ENCODE measurements at regions of chr13 and their contacts with region 1.

Region 1: DNA sequence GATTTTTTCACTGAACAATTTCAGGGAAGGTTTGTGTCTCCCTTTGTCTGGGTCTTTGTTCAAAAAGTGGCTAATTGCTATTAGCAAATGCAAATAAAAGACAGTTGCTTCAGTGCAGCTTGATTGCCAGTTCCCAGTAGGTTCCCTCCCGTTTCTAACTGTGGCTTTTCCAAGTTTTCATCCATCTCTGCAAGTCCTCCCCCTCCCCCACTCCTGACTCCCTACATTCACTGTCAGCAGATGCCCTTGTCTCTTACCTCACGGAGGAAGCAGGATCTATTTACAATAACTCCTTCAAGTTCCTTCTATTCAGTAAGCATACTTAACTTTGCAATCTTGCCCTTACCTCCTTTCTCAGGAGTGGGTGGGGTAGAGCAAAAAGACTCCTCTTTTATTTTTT is 55.4 kb upstream of the SCEL start:
- DNase-seq: no peak
- H3K4me3 ChIP-seq: no peak overlapping the region
- H3K4me3 Mint-ChIP-seq: no peak overlapping the region
- H3K27ac ChIP-seq: no peak overlapping the region
- H3K27ac Mint-ChIP-seq: no peak overlapping the region
- H3K4me1 ChIP-seq: peaks cover 8% of the 10 kb centered on the region
- H3K4me1 Mint-ChIP-seq: peaks cover 8 to 11% (median 10%) of the 10 kb centered on the region in 4 donors
- H3K27me3 ChIP-seq: no peaks in the 10 kb centered on the region
- H3K27me3 Mint-ChIP-seq: no peaks in the 10 kb centered on the region

Region 2: DNA sequence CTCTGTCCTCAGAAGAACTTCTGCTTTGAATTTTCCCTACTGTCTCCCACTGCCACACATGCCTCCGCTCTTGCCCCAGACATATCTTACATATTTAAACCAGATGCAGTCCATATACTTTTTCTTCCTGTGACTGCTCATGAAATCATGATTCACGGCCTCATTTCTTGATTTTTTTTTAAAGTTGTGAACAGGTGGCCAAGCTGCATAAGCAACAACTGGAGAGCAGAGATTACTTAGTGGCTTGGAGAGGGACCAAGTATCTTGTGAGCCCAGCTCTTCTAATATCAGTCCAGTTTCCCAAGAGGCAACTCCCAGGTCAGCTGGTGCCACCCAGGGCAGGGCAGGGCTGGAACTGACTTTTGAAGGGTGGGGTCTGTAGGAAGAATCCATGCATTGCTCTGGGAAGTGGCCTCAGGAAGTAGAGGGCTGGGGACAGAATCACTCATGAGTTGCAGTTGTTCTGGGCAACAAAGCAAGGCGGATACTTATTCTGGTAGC is 1691.5 kb before region 1 on chr13:
- CTCF ChIA-PET with region 1: no interaction called
- POLR2A ChIA-PET with region 1: no interaction called
- intact Hi-C with region 1: no loop called
- DNase-seq: no peak
- H3K4me3 ChIP-seq: no peak overlapping the region
- H3K4me3 Mint-ChIP-seq: no peak overlapping the region
- H3K27ac ChIP-seq: no peak overlapping the region
- H3K27ac Mint-ChIP-seq: no peak overlapping the region
- H3K4me1 ChIP-seq: no peaks in the 10 kb centered on the region
- H3K4me1 Mint-ChIP-seq: no peaks in the 10 kb centered on the region
- H3K27me3 ChIP-seq: no peaks in the 10 kb centered on the region
- H3K27me3 Mint-ChIP-seq: no peaks in the 10 kb centered on the region

Region 3: GRCh38 chr13:77168237-77168636 is 311.8 kb before region 1 on chr13:
- CTCF ChIA-PET with region 1: no interaction called
- POLR2A ChIA-PET with region 1: no interaction called
- intact Hi-C with region 1: loop called (anchors 5 kb)
- DNase-seq: no peak
- H3K4me3 ChIP-seq: no peak overlapping the region
- H3K4me3 Mint-ChIP-seq: no peak overlapping the region
- H3K27ac ChIP-seq: no peak overlapping the region
- H3K27ac Mint-ChIP-seq: peak overlapping the region in 1 of 7 donors; percentile 52
- H3K4me1 ChIP-seq: no peaks in the 10 kb centered on the region
- H3K4me1 Mint-ChIP-seq: peaks cover 3 to 16% (median 6%) of the 10 kb centered on the region in 4 donors
- H3K27me3 ChIP-seq: no peaks in the 10 kb centered on the region
- H3K27me3 Mint-ChIP-seq: no peaks in the 10 kb centered on the region

Region 4: GRCh38 chr13:77184455-77184854 is 295.6 kb before region 1 on chr13:
- CTCF ChIA-PET with region 1: interaction called, 10 read pairs
- POLR2A ChIA-PET with region 1: interaction called, 4 read pairs
- intact Hi-C with region 1: loop called (anchors 2 kb)
- DNase-seq: no peak
- H3K4me3 ChIP-seq: no peak overlapping the region
- H3K4me3 Mint-ChIP-seq: peak overlapping the region in 1 of 8 donors; percentile 1
- H3K27ac ChIP-seq: no peak overlapping the region
- H3K27ac Mint-ChIP-seq: peak overlapping the region in 5 of 7 donors; percentile 16 to 90 (median 71)
- H3K4me1 ChIP-seq: peaks cover 15% of the 10 kb centered on the region
- H3K4me1 Mint-ChIP-seq: peaks cover 11 to 17% (median 14%) of the 10 kb centered on the region in 4 donors
- H3K27me3 ChIP-seq: no peaks in the 10 kb centered on the region
- H3K27me3 Mint-ChIP-seq: no peaks in the 10 kb centered on the region

Region 5: DNA sequence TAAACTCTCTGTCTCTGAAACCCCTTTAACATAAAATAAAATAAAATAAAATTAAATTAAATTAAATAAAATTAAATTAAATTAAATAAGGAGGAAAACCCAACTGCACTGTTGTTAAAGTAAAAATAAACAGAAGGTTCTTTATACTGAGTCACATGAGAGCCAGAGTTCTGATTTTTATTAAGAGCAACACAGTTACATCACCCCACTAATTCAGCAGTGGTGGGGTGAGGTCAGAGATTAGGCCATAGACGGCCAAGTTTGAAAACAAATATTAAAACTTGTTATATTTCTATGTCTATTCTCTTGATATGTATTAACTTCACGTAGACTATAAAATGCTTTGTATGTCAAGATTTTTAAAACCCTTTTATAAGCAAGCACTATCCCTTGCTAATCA is 212.7 kb before region 1 on chr13:
- CTCF ChIA-PET with region 1: interaction called, 32 read pairs
- POLR2A ChIA-PET with region 1: no interaction called
- intact Hi-C with region 1: no loop called
- DNase-seq: no peak
- H3K4me3 ChIP-seq: no peak overlapping the region
- H3K4me3 Mint-ChIP-seq: no peak overlapping the region
- H3K27ac ChIP-seq: no peak overlapping the region
- H3K27ac Mint-ChIP-seq: no peak overlapping the region
- H3K4me1 ChIP-seq: no peaks in the 10 kb centered on the region
- H3K4me1 Mint-ChIP-seq: peaks cover 0 to 14% (median 5%) of the 10 kb centered on the region in 4 donors
- H3K27me3 ChIP-seq: no peaks in the 10 kb centered on the region
- H3K27me3 Mint-ChIP-seq: no peaks in the 10 kb centered on the region

Region 6: GRCh38 chr13:77285098-77285497 is 195.0 kb before region 1 on chr13:
- CTCF ChIA-PET with region 1: interaction called, 10 read pairs
- POLR2A ChIA-PET with region 1: no interaction called
- intact Hi-C with region 1: no loop called
- DNase-seq: no peak
- H3K4me3 ChIP-seq: no peak overlapping the region
- H3K4me3 Mint-ChIP-seq: no peak overlapping the region
- H3K27ac ChIP-seq: no peak overlapping the region
- H3K27ac Mint-ChIP-seq: no peak overlapping the region
- H3K4me1 ChIP-seq: no peaks in the 10 kb centered on the region
- H3K4me1 Mint-ChIP-seq: peaks cover 17 to 33% (median 26%) of the 10 kb centered on the region in 4 donors
- H3K27me3 ChIP-seq: no peaks in the 10 kb centered on the region
- H3K27me3 Mint-ChIP-seq: no peaks in the 10 kb centered on the region

Region 7: DNA sequence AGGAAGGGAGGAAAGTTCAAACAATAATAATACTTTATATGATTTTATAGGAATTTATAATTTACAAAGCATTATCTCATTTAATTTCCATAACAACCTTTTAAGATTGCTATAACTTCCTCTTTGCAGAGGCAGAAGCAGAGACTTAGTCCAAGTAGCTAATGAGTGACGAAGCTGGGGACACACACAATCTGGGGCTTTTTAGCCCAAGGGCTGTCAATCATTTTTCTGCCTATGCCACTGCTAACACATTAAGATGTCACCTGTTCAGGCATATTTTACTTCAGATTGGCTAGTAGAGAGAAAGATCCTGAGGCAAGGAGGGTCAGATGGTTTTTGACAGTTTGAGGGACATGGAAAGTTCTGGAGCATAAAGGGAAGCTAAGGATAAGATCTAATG is 68.0 kb after region 1 on chr13:
- CTCF ChIA-PET with region 1: no interaction called
- POLR2A ChIA-PET with region 1: no interaction called
- intact Hi-C with region 1: no loop called
- DNase-seq: no peak
- H3K4me3 ChIP-seq: no peak overlapping the region
- H3K4me3 Mint-ChIP-seq: no peak overlapping the region
- H3K27ac ChIP-seq: no peak overlapping the region
- H3K27ac Mint-ChIP-seq: no peak overlapping the region
- H3K4me1 ChIP-seq: no peaks in the 10 kb centered on the region
- H3K4me1 Mint-ChIP-seq: no peaks in the 10 kb centered on the region
- H3K27me3 ChIP-seq: no peaks in the 10 kb centered on the region
- H3K27me3 Mint-ChIP-seq: peaks cover 8 to 10% of the 10 kb centered on the region in 2 donors

Region 8: DNA sequence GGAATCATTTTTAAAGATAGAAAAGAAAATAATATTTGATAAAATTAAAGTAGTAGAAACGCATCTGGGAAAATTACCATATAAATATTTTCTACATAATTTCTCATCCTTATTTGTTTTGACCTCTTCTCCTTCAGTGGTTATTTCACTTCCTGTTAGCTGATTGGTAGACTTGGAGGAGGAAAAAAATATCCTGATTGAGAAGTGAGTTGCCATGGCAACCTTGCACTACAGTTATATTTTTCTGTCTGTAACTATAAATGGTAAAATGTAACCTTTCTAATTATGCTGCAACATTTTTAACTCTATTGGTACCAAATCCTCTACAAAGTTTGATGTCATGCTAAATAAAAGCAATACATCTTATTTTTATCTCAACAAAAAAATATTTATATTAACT is 100.7 kb after region 1 on chr13:
- CTCF ChIA-PET with region 1: no interaction called
- POLR2A ChIA-PET with region 1: no interaction called
- intact Hi-C with region 1: no loop called
- DNase-seq: no peak
- H3K4me3 ChIP-seq: no peak overlapping the region
- H3K4me3 Mint-ChIP-seq: no peak overlapping the region
- H3K27ac ChIP-seq: no peak overlapping the region
- H3K27ac Mint-ChIP-seq: no peak overlapping the region
- H3K4me1 ChIP-seq: no peaks in the 10 kb centered on the region
- H3K4me1 Mint-ChIP-seq: no peaks in the 10 kb centered on the region
- H3K27me3 ChIP-seq: no peaks in the 10 kb centered on the region
- H3K27me3 Mint-ChIP-seq: peaks cover 22 to 36% of the 10 kb centered on the region in 2 donors

Region 9: GRCh38 chr13:77697217-77698103 is 217.4 kb after region 1 on chr13 and contains the start of gene SLAIN1:
- CTCF ChIA-PET with region 1: interaction called, 5 read pairs
- POLR2A ChIA-PET with region 1: no interaction called
- intact Hi-C with region 1: loop called (anchors 5 kb)
- DNase-seq: peak; percentile 84 to 91 (median 86)
- H3K4me3 ChIP-seq: peak within 1 kb of the TSS; percentile 84 to 90
- H3K4me3 Mint-ChIP-seq: peak within 1 kb of the TSS; percentile 97 to 100 (median 99)
- H3K27ac ChIP-seq: peak within 1 kb of the TSS; percentile 82
- H3K27ac Mint-ChIP-seq: peak within 1 kb of the TSS; percentile 85 to 97 (median 94)
- H3K4me1 ChIP-seq: peaks cover 38% of the 10 kb centered on the region
- H3K4me1 Mint-ChIP-seq: peaks cover 31 to 55% (median 41%) of the 10 kb centered on the region in 4 donors
- H3K27me3 ChIP-seq: no peaks in the 10 kb centered on the region
- H3K27me3 Mint-ChIP-seq: no peaks in the 10 kb centered on the region
- total RNA-seq, gene SLAIN1: 55.1 to 58.9 TPM

Region 10: GRCh38 chr13:77907666-77908341 is 427.7 kb after region 1 on chr13:
- CTCF ChIA-PET with region 1: no interaction called
- POLR2A ChIA-PET with region 1: no interaction called
- intact Hi-C with region 1: no loop called
- DNase-seq: no peak
- H3K4me3 ChIP-seq: no peak overlapping the region
- H3K4me3 Mint-ChIP-seq: no peak overlapping the region
- H3K27ac ChIP-seq: no peak overlapping the region
- H3K27ac Mint-ChIP-seq: no peak overlapping the region
- H3K4me1 ChIP-seq: no peaks in the 10 kb centered on the region
- H3K4me1 Mint-ChIP-seq: no peaks in the 10 kb centered on the region
- H3K27me3 ChIP-seq: no peaks in the 10 kb centered on the region
- H3K27me3 Mint-ChIP-seq: peaks cover 0 to 2% of the 10 kb centered on the region in 2 donors

Measured in CD4-positive, alpha-beta memory T cell (primary cell).